RWPE1 (cell line): ENCODE measurements at regions of chr5 and their contacts with region 1.

Region 1: GRCh38 chr5:72920690-72921502 is 34.9 kb upstream of the FCHO2 start:
- DNase-seq: peak; percentile 72
- H3K27ac ChIP-seq: no peak overlapping the region
- CTCF ChIP-seq: peak; percentile 65

Region 2: GRCh38 chr5:73093943-73094342 is 173.0 kb after region 1 on chr5:
- CTCF ChIA-PET with region 1: interaction called, 10 read pairs
- POLR2A ChIA-PET with region 1: no interaction called
- DNase-seq: no peak
- H3K27ac ChIP-seq: peak overlapping the region; percentile 56
- CTCF ChIP-seq: no peak

Region 3: DNA sequence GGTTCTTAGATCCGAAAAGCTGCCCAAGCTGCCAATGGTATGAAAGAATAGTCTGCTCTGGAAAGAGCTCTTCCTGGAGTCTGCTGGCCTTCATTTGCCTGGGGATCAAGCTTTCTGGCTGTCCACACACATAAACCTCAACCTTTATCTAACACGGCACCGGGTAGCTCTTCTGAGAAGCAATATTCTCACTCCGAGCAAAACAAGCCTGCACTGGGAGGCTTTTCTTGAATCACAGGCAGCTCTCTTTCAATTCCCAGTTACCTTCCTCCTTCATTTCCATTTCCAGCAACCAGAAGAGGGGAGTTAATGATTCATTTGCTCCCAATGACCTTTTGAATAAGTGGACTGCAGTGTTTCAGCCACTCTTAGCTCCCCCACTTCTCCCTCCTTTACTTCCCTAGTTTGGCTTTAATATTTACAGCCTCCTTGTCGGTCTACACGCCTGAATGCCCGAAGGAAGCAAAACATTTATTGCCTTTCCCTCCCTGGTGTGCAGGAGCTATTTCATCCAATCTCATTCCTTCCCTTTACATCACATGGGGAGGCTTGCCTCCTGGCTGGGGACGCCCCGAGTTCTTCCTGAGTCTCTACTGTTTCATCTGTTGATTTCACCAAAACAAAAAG is 892.2 kb after region 1 on chr5:
- CTCF ChIA-PET with region 1: no interaction called
- POLR2A ChIA-PET with region 1: no interaction called
- DNase-seq: peak; percentile 26
- H3K27ac ChIP-seq: no peak overlapping the region
- CTCF ChIP-seq: no peak